PC-9 (cell line): ENCODE measurements at regions of chr1 and their contacts with region 1.

Region 1: DNA sequence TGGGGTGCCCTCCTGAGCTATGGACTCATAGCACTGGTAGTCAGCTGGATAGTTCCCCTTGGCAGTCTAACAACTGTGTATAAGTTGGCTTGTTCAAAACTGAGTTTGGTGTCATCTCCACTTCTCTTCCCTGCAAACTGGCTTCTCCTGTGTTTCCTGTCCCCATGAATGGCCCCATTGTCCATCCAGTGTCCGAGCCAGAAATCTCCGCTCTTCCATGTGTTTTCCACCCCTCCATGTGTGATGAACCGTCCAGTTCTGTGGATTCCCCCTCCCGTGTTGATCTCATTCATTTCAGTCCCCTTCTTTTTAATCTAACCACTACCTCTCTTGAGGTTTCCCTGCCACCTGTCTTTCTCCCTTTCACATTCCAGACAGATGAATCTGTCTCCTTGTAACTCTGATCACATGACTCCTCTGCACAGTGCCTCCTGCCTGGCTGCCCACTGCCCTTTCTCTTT is 195.7 kb downstream of the ROR1 start:
- DNase-seq: peak; percentile 43 to 70
- H3K4me3 ChIP-seq: no peak overlapping the region
- H3K27ac ChIP-seq: peak overlapping the region; percentile 59
- H3K4me1 ChIP-seq: peaks cover 27% of the 10 kb centered on the region
- H3K27me3 ChIP-seq: no peaks in the 10 kb centered on the region
- CTCF ChIP-seq: no peak

Region 2: GRCh38 chr1:63423649-63424048 is 545.8 kb before region 1 on chr1:
- CTCF ChIA-PET with region 1: no interaction called
- POLR2A ChIA-PET with region 1: no interaction called
- intact Hi-C with region 1: no loop called
- DNase-seq: no peak
- H3K4me3 ChIP-seq: no peak overlapping the region
- H3K27ac ChIP-seq: no peak overlapping the region
- H3K4me1 ChIP-seq: no peaks in the 10 kb centered on the region
- H3K27me3 ChIP-seq: no peaks in the 10 kb centered on the region
- CTCF ChIP-seq: no peak

Region 3: GRCh38 chr1:64038965-64039926 is 69.8 kb after region 1 on chr1:
- CTCF ChIA-PET with region 1: no interaction called
- POLR2A ChIA-PET with region 1: no interaction called
- intact Hi-C with region 1: loop called (anchors 2 kb)
- DNase-seq: peak; percentile 76 to 94
- H3K4me3 ChIP-seq: no peak overlapping the region
- H3K27ac ChIP-seq: peak overlapping the region; percentile 60
- H3K4me1 ChIP-seq: peaks cover 58% of the 10 kb centered on the region
- H3K27me3 ChIP-seq: no peaks in the 10 kb centered on the region
- CTCF ChIP-seq: no peak